ENCODE measurements at regions of chr19 and their contacts with region 1.

Region 1: GRCh38 chr19:15304140-15304705 is 28.1 kb downstream of the BRD4 start:
- DNase-seq: no peak
- H3K4me3 Mint-ChIP-seq: no peak overlapping the region
- H3K27ac Mint-ChIP-seq: peak overlapping the region; percentile 87
- H3K4me1 Mint-ChIP-seq: peaks cover 61% of the 10 kb centered on the region
- H3K27me3 Mint-ChIP-seq: no peaks in the 10 kb centered on the region

Region 2: DNA sequence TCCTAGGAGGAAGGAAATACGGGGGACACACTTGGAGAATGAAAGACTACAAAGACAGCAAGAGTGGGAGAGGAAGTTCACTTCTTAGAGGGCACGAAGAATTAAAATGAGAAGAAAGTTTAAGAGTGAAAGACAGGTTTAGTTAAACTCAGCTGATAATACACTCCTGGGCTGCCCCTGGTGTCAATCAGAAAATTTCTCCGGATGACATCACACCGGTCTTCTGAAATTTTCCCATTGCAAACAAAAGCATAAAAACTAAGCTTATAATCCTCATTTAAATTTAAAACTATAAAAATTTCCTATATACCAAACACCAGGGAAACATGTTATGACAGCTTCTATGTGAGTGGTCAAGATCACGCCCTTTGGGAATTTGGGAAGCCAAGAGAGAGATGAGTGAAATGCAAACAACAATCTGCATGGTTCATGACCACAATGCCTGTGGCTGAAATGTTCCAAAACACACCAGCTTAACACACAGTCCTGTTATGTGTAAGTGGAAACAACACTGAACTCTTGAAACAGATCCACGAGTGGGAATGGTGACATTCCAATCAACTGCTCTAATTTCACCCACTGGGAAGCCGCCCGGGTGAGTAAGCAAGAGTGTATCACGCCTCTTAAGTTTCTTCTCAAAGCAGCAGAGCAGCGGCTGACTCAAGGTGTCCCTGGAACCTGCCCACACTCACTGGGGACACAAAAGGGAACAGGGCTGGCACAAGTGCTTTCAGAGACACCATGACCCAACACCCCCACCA is 20.9 kb before region 1 on chr19:
- intact Hi-C with region 1: loop called (anchors 1 kb)
- DNase-seq: no peak
- H3K4me3 Mint-ChIP-seq: peak overlapping the region; percentile 12
- H3K27ac Mint-ChIP-seq: peak overlapping the region; percentile 85
- H3K4me1 Mint-ChIP-seq: peaks cover 60% of the 10 kb centered on the region
- H3K27me3 Mint-ChIP-seq: no peaks in the 10 kb centered on the region

Region 3: DNA sequence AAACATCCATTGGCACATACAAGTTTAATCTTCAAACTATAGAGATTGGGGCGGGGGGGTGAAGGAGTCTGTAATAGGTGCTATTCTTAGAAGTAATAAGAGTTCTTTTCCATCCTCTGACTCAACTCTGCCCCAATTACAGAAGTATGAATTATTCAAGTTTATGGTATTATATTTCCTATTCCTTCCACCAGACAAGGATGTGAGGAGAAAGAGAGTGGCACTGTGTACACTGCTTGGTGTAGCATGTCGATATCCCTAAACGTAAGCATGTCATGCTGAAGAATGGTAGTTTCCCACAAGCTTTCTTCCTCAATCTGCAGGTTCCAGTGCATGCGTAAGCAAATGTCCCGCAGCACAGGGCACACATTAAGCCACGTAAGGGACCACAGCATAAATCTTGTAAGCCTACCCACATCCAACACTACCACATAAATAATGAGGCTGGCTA is 14.0 kb after region 1 on chr19:
- intact Hi-C with region 1: loop called (anchors 2 kb)
- DNase-seq: no peak
- H3K4me3 Mint-ChIP-seq: peak overlapping the region; percentile 5
- H3K27ac Mint-ChIP-seq: peak overlapping the region; percentile 78
- H3K4me1 Mint-ChIP-seq: peaks cover 74% of the 10 kb centered on the region
- H3K27me3 Mint-ChIP-seq: no peaks in the 10 kb centered on the region

Region 4: GRCh38 chr19:15332311-15332996 is 28.2 kb after region 1 on chr19 and contains the start of gene BRD4:
- intact Hi-C with region 1: loop called (anchors 2 kb)
- DNase-seq: peak; percentile 95
- H3K4me3 Mint-ChIP-seq: peak within 1 kb of the TSS; percentile 96
- H3K27ac Mint-ChIP-seq: peak within 1 kb of the TSS; percentile 96
- H3K4me1 Mint-ChIP-seq: peaks cover 29% of the 10 kb centered on the region
- H3K27me3 Mint-ChIP-seq: no peaks in the 10 kb centered on the region
- total RNA-seq, gene BRD4: 109 TPM in 2 replicates